Transverse colon (tissue), 4 donors: ENCODE measurements at regions of chr11 and their contacts with region 1.

Region 1: GRCh38 chr11:41102471-41102870 is 357.0 kb downstream of the LRRC4C start:
- DNase-seq: no peak
- H3K4me3 ChIP-seq: no peak overlapping the region
- H3K27ac ChIP-seq: no peak overlapping the region
- H3K4me1 ChIP-seq: no peaks in the 10 kb centered on the region
- H3K27me3 ChIP-seq: no peaks in the 10 kb centered on the region
- CTCF ChIP-seq: no peak
- EP300 ChIP-seq: no peak
- POLR2A ChIP-seq: no peak

Region 2: DNA sequence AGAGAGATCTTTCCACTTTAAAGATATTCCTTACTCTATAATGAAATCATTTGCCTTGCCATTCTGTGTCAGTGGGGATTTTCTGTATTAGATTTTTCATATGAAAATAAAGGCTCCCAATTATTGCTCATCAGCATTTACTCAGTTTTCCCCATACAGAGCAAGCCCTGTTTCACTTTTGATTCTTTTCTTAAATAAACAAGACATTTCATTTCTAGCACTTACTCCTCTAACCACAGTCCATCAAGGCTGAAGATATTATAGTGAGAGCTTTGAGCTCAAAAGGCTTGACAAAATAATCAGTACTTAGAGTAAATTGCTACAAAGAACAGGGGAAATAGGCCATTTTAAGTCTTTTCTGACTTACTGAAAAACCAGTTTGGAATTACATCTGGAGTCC is 28.2 kb before region 1 on chr11:
- in situ Hi-C with region 1: no loop called
- intact Hi-C with region 1: loop called (anchors 1 kb)
- DNase-seq: no peak
- H3K4me3 ChIP-seq: no peak overlapping the region
- H3K27ac ChIP-seq: no peak overlapping the region
- H3K4me1 ChIP-seq: no peaks in the 10 kb centered on the region
- H3K27me3 ChIP-seq: no peaks in the 10 kb centered on the region
- CTCF ChIP-seq: no peak
- EP300 ChIP-seq: no peak
- POLR2A ChIP-seq: no peak

Region 3: GRCh38 chr11:41201156-41201555 is 98.7 kb after region 1 on chr11:
- in situ Hi-C with region 1: no loop called
- intact Hi-C with region 1: no loop called
- DNase-seq: no peak
- H3K4me3 ChIP-seq: no peak overlapping the region
- H3K27ac ChIP-seq: no peak overlapping the region
- H3K4me1 ChIP-seq: no peaks in the 10 kb centered on the region
- H3K27me3 ChIP-seq: no peaks in the 10 kb centered on the region
- CTCF ChIP-seq: no peak
- EP300 ChIP-seq: no peak
- POLR2A ChIP-seq: no peak